ENCODE measurements at regions of chr14 and their contacts with region 1.

Region 1: GRCh38 chr14:50231475-50232275 is at the start of gene SOS2:
- DNase-seq: peak; percentile 89 to 94 (median 92)
- ATAC-seq: peak; percentile 82 to 96 (median 95)
- H3K4me3 ChIP-seq: peak within 1 kb of the TSS; percentile 67 to 95 (median 80)
- H3K27ac ChIP-seq: peak within 1 kb of the TSS; percentile 93 to 99 (median 98)
- H3K4me1 ChIP-seq: peaks cover 0 to 53% (median 40%) of the 10 kb centered on the region in 12 donors
- H3K27me3 ChIP-seq: no peaks in the 10 kb centered on the region
- CTCF ChIP-seq: peak in 3 of 12 donors; percentile 23 to 37 (median 26)
- POLR2A ChIP-seq: peak; percentile 42 to 84
- total RNA-seq, gene SOS2: 26.4 to 47.3 (median 31.5) TPM

Region 2: GRCh38 chr14:50116181-50116956 is 115.3 kb before region 1 on chr14 and contains the start of gene VCPKMT:
- intact Hi-C with region 1: loop called in 2 of 10 experiments (anchors 5 kb)
- DNase-seq: peak; percentile 94 to 97 (median 95)
- ATAC-seq: peak; percentile 97 to 100 (median 100)
- H3K4me3 ChIP-seq: peak within 1 kb of the TSS; percentile 68 to 87 (median 72)
- H3K27ac ChIP-seq: peak within 1 kb of the TSS; percentile 66 to 90 (median 82)
- H3K4me1 ChIP-seq: peaks cover 0 to 22% (median 14%) of the 10 kb centered on the region in 12 donors
- H3K27me3 ChIP-seq: no peaks in the 10 kb centered on the region
- CTCF ChIP-seq: peak in 1 of 12 donors; percentile 8
- POLR2A ChIP-seq: peak; percentile 11 to 89
- total RNA-seq, gene VCPKMT: 0.95 to 4.9 (median 2.9) TPM

Region 3: DNA sequence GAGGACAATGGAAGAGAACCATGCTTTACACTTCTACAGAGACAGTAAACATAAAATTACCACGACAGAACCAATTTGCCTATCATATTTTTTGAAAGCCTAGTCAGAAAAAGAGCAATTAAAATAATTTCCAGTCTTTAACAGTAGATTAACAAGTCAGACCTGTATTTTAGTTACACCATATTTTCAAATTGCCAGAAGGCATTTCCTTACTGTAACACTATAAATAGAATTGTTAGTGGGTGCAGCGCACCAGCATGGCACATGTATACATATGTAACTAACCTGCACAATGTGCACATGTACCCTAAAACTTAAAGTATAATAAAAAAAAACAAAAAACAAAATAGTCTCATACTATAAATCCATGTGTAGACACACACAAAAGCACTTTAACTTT is 16.3 kb before region 1 on chr14:
- intact Hi-C with region 1: no loop called
- DNase-seq: no peak
- ATAC-seq: no peak
- H3K4me3 ChIP-seq: no peak overlapping the region
- H3K27ac ChIP-seq: no peak overlapping the region
- H3K4me1 ChIP-seq: peaks cover 0 to 60% (median 22%) of the 10 kb centered on the region in 12 donors
- H3K27me3 ChIP-seq: no peaks in the 10 kb centered on the region
- CTCF ChIP-seq: no peak
- POLR2A ChIP-seq: no peak

Region 4: DNA sequence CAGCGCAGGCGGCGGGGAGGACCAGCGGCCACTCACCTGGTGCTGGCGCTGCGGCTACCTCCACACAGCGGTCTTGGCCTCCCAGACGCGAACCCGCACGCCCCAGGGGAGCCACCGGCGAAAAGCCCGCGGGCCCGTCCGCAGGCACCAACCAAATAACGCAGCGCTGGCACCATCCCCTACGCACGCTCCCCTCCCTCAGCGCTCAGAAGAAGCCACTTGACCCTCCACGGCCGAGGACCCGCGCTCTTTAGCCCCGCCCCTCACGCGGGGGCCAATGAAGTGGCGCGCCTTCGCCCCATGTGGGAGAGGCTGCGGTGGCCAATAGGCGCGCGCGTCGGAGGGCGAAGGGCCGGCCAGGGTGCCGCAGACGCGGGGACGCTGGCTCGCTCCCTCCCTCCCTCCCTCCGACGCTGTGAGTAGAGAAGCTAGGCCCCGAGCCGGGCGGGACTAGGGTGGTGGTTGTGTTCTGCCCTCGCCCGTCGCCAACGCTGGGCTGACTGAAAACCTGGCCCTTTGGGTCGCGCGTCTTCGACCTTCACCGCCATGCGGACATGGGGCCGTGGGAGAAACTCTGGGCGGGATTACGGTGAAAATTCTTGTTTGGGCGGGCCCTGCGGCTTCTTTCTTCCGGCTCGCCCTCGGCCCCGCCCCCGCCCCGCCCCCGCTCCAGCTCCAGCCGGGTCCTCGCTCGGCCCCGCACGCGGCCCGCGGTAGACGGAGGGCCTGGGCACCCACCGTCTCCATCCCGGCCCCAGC is 80.5 kb after region 1 on chr14 and contains the starts of genes DMAC2L and L2HGDH:
- intact Hi-C with region 1: loop called in 3 of 10 experiments (anchors 5 kb)
- DNase-seq: peak; percentile 93 to 96 (median 95)
- ATAC-seq: peak; percentile 99
- H3K4me3 ChIP-seq: peak within 1 kb of the TSS; percentile 64 to 96 (median 84)
- H3K27ac ChIP-seq: peak within 1 kb of the TSS; percentile 67 to 95 (median 93)
- H3K4me1 ChIP-seq: peaks cover 0 to 21% (median 15%) of the 10 kb centered on the region in 12 donors
- H3K27me3 ChIP-seq: no peaks in the 10 kb centered on the region
- CTCF ChIP-seq: peak in 6 of 12 donors; percentile 6 to 47 (median 30)
- POLR2A ChIP-seq: peak in 1 of 2 donors; percentile 77
- total RNA-seq, gene DMAC2L: 12.6 to 29.9 (median 23.7) TPM
- total RNA-seq, gene L2HGDH: 6.5 to 12.2 (median 9.1) TPM

Measured in heart left ventricle (tissue), 16 donors.